MCF 10A (cell line): ENCODE measurements at regions of chr1 and their contacts with region 1.

Region 1: GRCh38 chr1:162612606-162613400 is 19.5 kb upstream of the DDR2 start:
- DNase-seq: peak; percentile 63
- H3K4me3 Mint-ChIP-seq: no peak overlapping the region
- H3K27ac Mint-ChIP-seq: peak overlapping the region; percentile 66
- H3K4me1 Mint-ChIP-seq: peaks cover 5% of the 10 kb centered on the region
- H3K27me3 Mint-ChIP-seq: no peaks in the 10 kb centered on the region
- CTCF ChIP-seq: no peak

Region 2: GRCh38 chr1:161978011-161978790 is 634.6 kb before region 1 on chr1:
- CTCF ChIA-PET with region 1: no interaction called
- POLR2A ChIA-PET with region 1: no interaction called
- intact Hi-C with region 1: no loop called
- DNase-seq: no peak
- H3K4me3 Mint-ChIP-seq: no peak overlapping the region
- H3K27ac Mint-ChIP-seq: no peak overlapping the region
- H3K4me1 Mint-ChIP-seq: no peaks in the 10 kb centered on the region
- H3K27me3 Mint-ChIP-seq: peaks cover 77% of the 10 kb centered on the region
- CTCF ChIP-seq: no peak

Region 3: DNA sequence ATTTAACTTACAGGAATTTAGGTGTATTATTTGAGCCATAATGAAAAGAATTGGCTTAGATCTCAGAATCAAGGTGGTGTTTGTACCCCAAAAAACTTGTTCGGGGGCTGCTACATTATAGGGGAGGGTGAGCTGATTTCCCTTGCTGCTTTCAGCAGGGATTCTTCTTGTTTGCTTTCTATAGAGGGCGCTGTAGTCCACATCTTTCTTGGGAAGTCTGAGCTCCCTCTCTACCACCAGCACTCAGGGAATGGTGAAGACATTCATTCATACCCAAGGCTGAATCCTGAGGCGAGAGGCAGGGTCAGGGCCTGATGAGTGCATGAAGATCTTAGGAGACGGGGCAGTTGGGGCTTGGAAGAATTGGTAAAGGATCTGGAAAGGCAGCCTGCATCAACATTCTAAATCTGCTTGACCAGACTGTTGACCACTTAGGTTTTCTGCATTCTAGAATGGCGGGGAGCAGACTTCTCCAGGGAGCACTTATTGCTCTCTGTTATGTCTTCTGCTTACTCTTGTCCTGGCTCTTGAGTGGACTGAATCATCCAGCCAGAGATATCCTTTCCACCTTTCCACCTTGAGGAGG is 255.0 kb before region 1 on chr1:
- CTCF ChIA-PET with region 1: interaction called, 3 read pairs
- POLR2A ChIA-PET with region 1: no interaction called
- intact Hi-C with region 1: loop called (anchors 5 kb)
- DNase-seq: peak; percentile 80
- H3K4me3 Mint-ChIP-seq: no peak overlapping the region
- H3K27ac Mint-ChIP-seq: no peak overlapping the region
- H3K4me1 Mint-ChIP-seq: peaks cover 8% of the 10 kb centered on the region
- H3K27me3 Mint-ChIP-seq: no peaks in the 10 kb centered on the region
- CTCF ChIP-seq: peak; percentile 83

Region 4: GRCh38 chr1:162596514-162597170 is 16.2 kb before region 1 on chr1:
- CTCF ChIA-PET with region 1: interaction called, 39 read pairs
- POLR2A ChIA-PET with region 1: no interaction called
- intact Hi-C with region 1: no loop called
- DNase-seq: no peak
- H3K4me3 Mint-ChIP-seq: no peak overlapping the region
- H3K27ac Mint-ChIP-seq: no peak overlapping the region
- H3K4me1 Mint-ChIP-seq: no peaks in the 10 kb centered on the region
- H3K27me3 Mint-ChIP-seq: no peaks in the 10 kb centered on the region
- CTCF ChIP-seq: no peak

Region 5: DNA sequence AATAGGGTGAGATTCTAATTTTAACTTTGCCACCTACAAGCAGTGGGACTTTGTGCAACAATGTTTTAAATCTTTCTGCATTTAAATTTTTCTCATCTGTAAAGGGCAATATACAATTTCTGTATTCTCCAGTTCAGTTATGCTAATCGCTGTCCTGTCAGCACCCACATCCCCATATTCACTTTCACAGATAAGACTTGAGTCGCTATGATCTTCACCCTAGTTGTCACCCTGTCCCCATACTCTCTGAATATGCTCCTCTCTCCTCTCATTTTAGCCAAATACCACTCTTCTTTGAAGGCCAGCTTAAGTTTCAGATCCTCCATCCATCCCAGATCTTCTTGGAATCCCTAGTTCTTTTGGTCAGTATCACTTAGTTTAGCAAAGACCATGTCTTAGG is 28.3 kb after region 1 on chr1:
- CTCF ChIA-PET with region 1: interaction called, 82 read pairs
- POLR2A ChIA-PET with region 1: no interaction called
- intact Hi-C with region 1: no loop called
- DNase-seq: no peak
- H3K4me3 Mint-ChIP-seq: no peak overlapping the region
- H3K27ac Mint-ChIP-seq: no peak overlapping the region
- H3K4me1 Mint-ChIP-seq: no peaks in the 10 kb centered on the region
- H3K27me3 Mint-ChIP-seq: no peaks in the 10 kb centered on the region
- CTCF ChIP-seq: no peak

Region 6: GRCh38 chr1:162678439-162678838 is 65.6 kb after region 1 on chr1:
- CTCF ChIA-PET with region 1: interaction called, 22 read pairs
- POLR2A ChIA-PET with region 1: interaction called, 4 read pairs
- intact Hi-C with region 1: no loop called
- DNase-seq: peak; percentile 94
- H3K4me3 Mint-ChIP-seq: peak overlapping the region; percentile 51
- H3K27ac Mint-ChIP-seq: peak overlapping the region; percentile 89
- H3K4me1 Mint-ChIP-seq: peaks cover 48% of the 10 kb centered on the region
- H3K27me3 Mint-ChIP-seq: no peaks in the 10 kb centered on the region
- CTCF ChIP-seq: no peak

Region 7: GRCh38 chr1:162756523-162756922 is 143.7 kb after region 1 on chr1:
- CTCF ChIA-PET with region 1: interaction called, 13 read pairs
- POLR2A ChIA-PET with region 1: interaction called, 3 read pairs
- intact Hi-C with region 1: loop called (anchors 1 kb)
- DNase-seq: peak; percentile 33
- H3K4me3 Mint-ChIP-seq: no peak overlapping the region
- H3K27ac Mint-ChIP-seq: no peak overlapping the region
- H3K4me1 Mint-ChIP-seq: no peaks in the 10 kb centered on the region
- H3K27me3 Mint-ChIP-seq: no peaks in the 10 kb centered on the region
- CTCF ChIP-seq: no peak

Region 8: DNA sequence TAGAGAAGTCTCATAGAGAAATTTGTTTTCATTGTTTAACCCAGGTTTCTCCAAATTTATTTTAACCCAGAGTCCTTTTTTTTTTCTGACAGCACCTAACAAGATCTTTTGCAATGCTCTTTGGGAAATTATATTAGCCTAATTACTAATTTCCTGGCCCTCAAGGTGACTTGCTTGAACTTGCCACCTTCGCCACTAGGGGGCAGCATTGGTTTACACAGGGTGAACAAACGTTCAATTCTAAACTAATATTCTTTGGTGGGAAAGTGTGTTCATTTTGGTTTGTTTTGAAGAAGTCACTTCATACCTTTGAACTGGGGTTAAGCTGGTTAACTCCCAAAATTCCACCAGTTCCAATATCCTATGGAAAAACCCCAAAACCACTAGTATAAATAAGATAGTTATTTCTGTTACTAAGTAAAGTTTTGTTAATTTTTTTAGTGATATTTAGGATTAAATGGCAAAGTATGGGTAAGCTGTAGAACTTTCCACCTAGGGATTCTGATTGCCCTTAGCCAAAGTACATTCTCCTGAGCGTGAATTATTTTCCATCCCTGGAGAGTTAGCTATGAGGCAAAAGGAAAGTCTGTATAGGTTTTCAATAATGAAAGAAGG is 235.1 kb after region 1 on chr1:
- CTCF ChIA-PET with region 1: interaction called, 14 read pairs
- POLR2A ChIA-PET with region 1: no interaction called
- intact Hi-C with region 1: no loop called
- DNase-seq: peak; percentile 92
- H3K4me3 Mint-ChIP-seq: no peak overlapping the region
- H3K27ac Mint-ChIP-seq: no peak overlapping the region
- H3K4me1 Mint-ChIP-seq: peaks cover 7% of the 10 kb centered on the region
- H3K27me3 Mint-ChIP-seq: peaks cover 24% of the 10 kb centered on the region
- CTCF ChIP-seq: peak; percentile 96

Region 9: GRCh38 chr1:163094589-163094988 is 481.8 kb after region 1 on chr1:
- CTCF ChIA-PET with region 1: no interaction called
- POLR2A ChIA-PET with region 1: no interaction called
- intact Hi-C with region 1: no loop called
- DNase-seq: peak; percentile 8
- H3K4me3 Mint-ChIP-seq: no peak overlapping the region
- H3K27ac Mint-ChIP-seq: no peak overlapping the region
- H3K4me1 Mint-ChIP-seq: peaks cover 7% of the 10 kb centered on the region
- H3K27me3 Mint-ChIP-seq: no peaks in the 10 kb centered on the region
- CTCF ChIP-seq: no peak

Region 10: DNA sequence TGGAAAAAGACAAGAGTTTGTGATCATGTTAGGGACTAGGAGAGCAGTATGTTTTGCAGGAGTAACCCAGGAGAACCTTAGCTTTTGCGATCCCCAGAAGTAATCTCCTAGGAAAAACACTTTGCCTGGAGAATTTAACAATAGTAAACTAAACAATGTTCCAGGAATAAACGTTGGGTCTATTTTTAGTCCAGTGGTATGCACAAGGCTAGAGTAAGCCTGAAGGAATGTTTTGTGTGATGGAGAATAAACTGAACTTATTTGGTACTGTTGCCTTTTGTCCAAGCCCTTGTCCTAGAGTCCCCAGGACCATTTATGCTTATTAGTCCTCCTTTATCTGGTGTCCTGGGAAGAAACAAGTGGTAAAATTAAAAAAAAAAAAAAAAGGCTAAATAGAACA is 618.6 kb after region 1 on chr1:
- CTCF ChIA-PET with region 1: no interaction called
- POLR2A ChIA-PET with region 1: no interaction called
- intact Hi-C with region 1: no loop called
- DNase-seq: no peak
- H3K4me3 Mint-ChIP-seq: no peak overlapping the region
- H3K27ac Mint-ChIP-seq: no peak overlapping the region
- H3K4me1 Mint-ChIP-seq: no peaks in the 10 kb centered on the region
- H3K27me3 Mint-ChIP-seq: no peaks in the 10 kb centered on the region
- CTCF ChIP-seq: no peak